ENCODE measurements at regions of chr11 and their contacts with region 1.

Region 1: GRCh38 chr11:22875869-22876473 is 15.7 kb upstream of the CCDC179 start:
- DNase-seq: peak in 1 of 2 experiments; percentile 52
- H3K4me3 ChIP-seq: no peak overlapping the region
- H3K27ac ChIP-seq: no peak overlapping the region
- H3K4me1 ChIP-seq: no peaks in the 10 kb centered on the region
- H3K27me3 ChIP-seq: no peaks in the 10 kb centered on the region
- CTCF ChIP-seq: peak in 2 of 3 experiments; percentile 70 to 93; a peak in 3 of 4 replicates
- EP300 ChIP-seq: no peak
- POLR2A ChIP-seq: no peak
- RAD21 ChIP-seq: peak; percentile 85 to 91

Region 2: DNA sequence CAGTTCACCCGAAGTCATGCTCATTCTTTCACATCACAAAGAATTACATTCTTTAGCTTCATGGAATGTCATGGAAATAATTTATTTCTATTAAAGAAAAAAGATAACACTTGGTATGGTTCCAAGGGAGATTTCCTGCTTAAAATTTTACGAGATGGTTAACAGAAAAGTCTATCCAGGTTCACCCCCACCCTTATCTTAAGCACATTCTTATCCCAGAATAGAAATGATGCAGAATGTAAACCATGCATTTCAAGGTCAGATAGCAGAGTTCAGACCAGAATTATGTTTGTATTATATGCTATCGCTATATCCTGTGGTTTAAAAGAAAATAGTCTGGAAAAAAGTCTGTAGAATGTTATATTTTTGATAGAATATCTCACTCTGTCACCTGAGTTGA is 150.9 kb before region 1 on chr11:
- CTCF ChIA-PET with region 1: no interaction called
- POLR2A ChIA-PET with region 1: no interaction called
- DNase-seq: no peak
- H3K4me3 ChIP-seq: no peak overlapping the region
- H3K27ac ChIP-seq: no peak overlapping the region
- H3K4me1 ChIP-seq: no peaks in the 10 kb centered on the region
- H3K27me3 ChIP-seq: no peaks in the 10 kb centered on the region
- CTCF ChIP-seq: no peak
- EP300 ChIP-seq: no peak
- POLR2A ChIP-seq: no peak
- RAD21 ChIP-seq: no peak

Region 3: GRCh38 chr11:22901603-22902002 is 25.6 kb after region 1 on chr11:
- CTCF ChIA-PET with region 1: interaction called, 11 read pairs
- POLR2A ChIA-PET with region 1: no interaction called
- DNase-seq: no peak
- H3K4me3 ChIP-seq: no peak overlapping the region
- H3K27ac ChIP-seq: no peak overlapping the region
- H3K4me1 ChIP-seq: no peaks in the 10 kb centered on the region
- H3K27me3 ChIP-seq: peaks cover 0 to 1% (median 0%) of the 10 kb centered on the region in 4 experiments; a peak in 2 of 7 replicates
- CTCF ChIP-seq: no peak
- EP300 ChIP-seq: no peak
- POLR2A ChIP-seq: no peak
- RAD21 ChIP-seq: no peak

Region 4: DNA sequence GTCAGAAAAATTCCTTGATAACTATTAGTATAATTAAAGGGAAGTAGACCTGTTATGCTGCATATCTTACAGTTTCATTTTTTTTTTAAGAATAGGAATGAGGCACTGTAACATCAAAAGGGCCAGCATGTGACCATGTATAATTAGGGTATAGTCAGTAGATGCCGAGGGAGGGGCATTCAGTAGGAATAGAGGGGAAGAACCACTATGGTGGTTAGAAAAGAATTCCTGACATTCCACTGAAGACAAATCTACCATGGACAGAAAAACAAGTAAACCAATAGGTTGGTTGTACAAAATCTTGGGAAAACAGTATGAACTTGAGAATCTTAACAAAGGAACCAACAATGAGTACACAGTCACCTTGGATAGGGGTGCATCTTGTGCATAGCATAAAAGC is 62.7 kb after region 1 on chr11:
- CTCF ChIA-PET with region 1: no interaction called
- POLR2A ChIA-PET with region 1: no interaction called
- DNase-seq: no peak
- H3K4me3 ChIP-seq: no peak overlapping the region
- H3K27ac ChIP-seq: no peak overlapping the region
- H3K4me1 ChIP-seq: no peaks in the 10 kb centered on the region
- H3K27me3 ChIP-seq: no peaks in the 10 kb centered on the region
- CTCF ChIP-seq: no peak
- EP300 ChIP-seq: no peak
- POLR2A ChIP-seq: no peak
- RAD21 ChIP-seq: no peak

Region 5: DNA sequence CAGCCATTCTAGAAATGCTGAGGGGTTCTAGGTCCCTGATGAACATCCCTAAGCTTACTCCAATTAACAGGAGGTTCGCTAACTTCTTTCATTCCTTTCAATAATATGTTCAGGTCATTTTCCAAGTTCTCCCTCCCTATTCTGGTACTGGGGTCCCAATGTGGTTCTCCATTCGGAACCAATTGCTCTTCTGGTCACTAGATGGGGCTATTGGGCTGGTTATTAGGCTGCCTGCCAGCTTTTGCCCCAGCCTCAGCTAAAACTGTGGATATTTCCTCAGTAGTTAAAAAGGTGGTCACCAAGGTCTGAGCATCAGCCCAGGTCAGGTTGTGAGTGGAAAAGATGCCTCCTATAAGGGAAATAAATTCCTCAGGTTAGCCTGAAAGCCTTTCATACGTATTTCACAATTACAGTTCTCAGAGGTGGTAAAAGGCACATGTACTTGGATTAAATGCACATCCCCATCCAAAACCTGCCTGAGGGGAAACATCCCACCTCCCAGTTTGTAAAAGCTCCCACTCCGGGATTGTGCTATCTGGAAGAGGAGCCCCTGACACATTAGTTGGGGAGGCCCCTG is 145.4 kb after region 1 on chr11:
- CTCF ChIA-PET with region 1: interaction called, 14 read pairs
- POLR2A ChIA-PET with region 1: no interaction called
- DNase-seq: peak in 1 of 2 experiments; percentile 2
- H3K4me3 ChIP-seq: no peak overlapping the region
- H3K27ac ChIP-seq: no peak overlapping the region; the same call in 1 of the 2 replicates
- H3K4me1 ChIP-seq: no peaks in the 10 kb centered on the region
- H3K27me3 ChIP-seq: no peaks in the 10 kb centered on the region
- CTCF ChIP-seq: peak; percentile 31 to 83 (median 76)
- EP300 ChIP-seq: no peak
- POLR2A ChIP-seq: no peak
- RAD21 ChIP-seq: peak; percentile 89 to 94

Measured in H1 (cell line).